CD8-positive, alpha-beta T cell (primary cell): ENCODE measurements at regions of chr1 and their contacts with region 1.

Region 1: GRCh38 chr1:16236511-16237342 is at the start of gene CPLANE2:
- DNase-seq: peak; percentile 88 to 98 (median 96)
- ATAC-seq: peak; percentile 77
- H3K4me3 ChIP-seq: peak within 1 kb of the TSS; percentile 88 to 92
- H3K4me3 Mint-ChIP-seq: peak within 1 kb of the TSS; percentile 88
- H3K27ac ChIP-seq: peak within 1 kb of the TSS; percentile 85 to 91
- H3K27ac Mint-ChIP-seq: peak within 1 kb of the TSS; percentile 92
- H3K4me1 ChIP-seq: peaks cover 17% of the 10 kb centered on the region
- H3K4me1 Mint-ChIP-seq: peaks cover 20% of the 10 kb centered on the region
- H3K27me3 ChIP-seq: no peaks in the 10 kb centered on the region
- H3K27me3 Mint-ChIP-seq: no peaks in the 10 kb centered on the region
- CTCF ChIP-seq: no peak
- total RNA-seq, gene CPLANE2: 5.2 to 5.6 TPM

Region 2: GRCh38 chr1:15617175-15617880 is 619.4 kb before region 1 on chr1 and contains the start of gene DDI2:
- CTCF ChIA-PET with region 1: no interaction called
- POLR2A ChIA-PET with region 1: no interaction called
- intact Hi-C with region 1: loop called in 1 of 2 experiments (anchors 10 kb)
- DNase-seq: peak; percentile 83 to 96 (median 92)
- ATAC-seq: peak; percentile 88
- H3K4me3 ChIP-seq: peak within 1 kb of the TSS; percentile 83 to 89
- H3K4me3 Mint-ChIP-seq: peak within 1 kb of the TSS; percentile 94
- H3K27ac ChIP-seq: peak within 1 kb of the TSS; percentile 73 to 91
- H3K27ac Mint-ChIP-seq: peak within 1 kb of the TSS; percentile 94
- H3K4me1 ChIP-seq: peaks cover 44% of the 10 kb centered on the region
- H3K4me1 Mint-ChIP-seq: peaks cover 46% of the 10 kb centered on the region
- H3K27me3 ChIP-seq: no peaks in the 10 kb centered on the region
- H3K27me3 Mint-ChIP-seq: no peaks in the 10 kb centered on the region
- CTCF ChIP-seq: no peak
- total RNA-seq, gene DDI2: 34.7 to 37.7 TPM

Region 3: DNA sequence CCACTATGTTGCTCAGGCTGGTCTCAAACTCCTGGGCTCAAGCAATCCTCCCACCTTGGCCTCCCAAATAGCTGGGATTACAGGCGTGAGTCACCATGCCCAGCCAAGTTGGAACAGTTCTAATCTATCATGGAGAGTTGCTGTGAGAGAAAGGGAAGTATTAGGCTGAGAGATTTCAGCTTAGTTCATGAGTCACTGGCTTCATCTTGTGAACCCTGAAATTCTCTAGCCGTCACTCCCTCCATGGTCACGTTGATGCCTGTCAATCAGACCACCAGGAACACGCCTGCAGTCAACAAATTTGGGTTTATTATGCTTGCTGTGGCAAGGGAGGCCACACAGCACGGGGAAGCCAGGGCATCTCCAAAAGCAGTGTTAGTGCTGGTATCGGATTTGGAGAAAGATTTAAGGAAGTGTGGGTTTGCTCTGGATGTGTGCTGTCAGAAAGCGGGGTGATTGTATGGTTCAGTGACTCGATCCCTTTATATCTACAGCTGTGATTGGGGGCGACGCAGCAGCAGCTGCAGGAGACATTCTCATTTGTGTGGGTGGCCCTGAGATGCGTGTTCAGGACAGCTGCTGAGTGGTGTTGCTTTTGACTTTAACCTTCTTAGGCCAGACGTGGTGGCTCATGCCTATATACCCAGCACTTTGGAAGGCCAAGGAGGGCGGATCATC is 448.0 kb before region 1 on chr1:
- CTCF ChIA-PET with region 1: no interaction called
- POLR2A ChIA-PET with region 1: no interaction called
- intact Hi-C with region 1: no loop called
- DNase-seq: peak in 1 of 9 experiments; percentile 18
- ATAC-seq: no peak
- H3K4me3 ChIP-seq: no peak overlapping the region
- H3K4me3 Mint-ChIP-seq: no peak overlapping the region
- H3K27ac ChIP-seq: no peak overlapping the region
- H3K27ac Mint-ChIP-seq: no peak overlapping the region
- H3K4me1 ChIP-seq: no peaks in the 10 kb centered on the region
- H3K4me1 Mint-ChIP-seq: peaks cover 3% of the 10 kb centered on the region
- H3K27me3 ChIP-seq: no peaks in the 10 kb centered on the region
- H3K27me3 Mint-ChIP-seq: peaks cover 11% of the 10 kb centered on the region
- CTCF ChIP-seq: no peak

Region 4: GRCh38 chr1:15975805-15976680 is 260.7 kb before region 1 on chr1 and contains the start of gene ZBTB17:
- CTCF ChIA-PET with region 1: no interaction called
- POLR2A ChIA-PET with region 1: no interaction called
- intact Hi-C with region 1: loop called in 1 of 2 experiments (anchors 1 kb)
- DNase-seq: peak; percentile 90 to 98 (median 95)
- ATAC-seq: peak; percentile 88
- H3K4me3 ChIP-seq: peak within 1 kb of the TSS; percentile 89 to 93
- H3K4me3 Mint-ChIP-seq: peak within 1 kb of the TSS; percentile 90
- H3K27ac ChIP-seq: peak within 1 kb of the TSS; percentile 68 to 87
- H3K27ac Mint-ChIP-seq: peak within 1 kb of the TSS; percentile 94
- H3K4me1 ChIP-seq: peaks cover 11% of the 10 kb centered on the region
- H3K4me1 Mint-ChIP-seq: peaks cover 38% of the 10 kb centered on the region
- H3K27me3 ChIP-seq: no peaks in the 10 kb centered on the region
- H3K27me3 Mint-ChIP-seq: no peaks in the 10 kb centered on the region
- CTCF ChIP-seq: no peak
- total RNA-seq, gene ZBTB17: 106 to 115 TPM

Region 5: DNA sequence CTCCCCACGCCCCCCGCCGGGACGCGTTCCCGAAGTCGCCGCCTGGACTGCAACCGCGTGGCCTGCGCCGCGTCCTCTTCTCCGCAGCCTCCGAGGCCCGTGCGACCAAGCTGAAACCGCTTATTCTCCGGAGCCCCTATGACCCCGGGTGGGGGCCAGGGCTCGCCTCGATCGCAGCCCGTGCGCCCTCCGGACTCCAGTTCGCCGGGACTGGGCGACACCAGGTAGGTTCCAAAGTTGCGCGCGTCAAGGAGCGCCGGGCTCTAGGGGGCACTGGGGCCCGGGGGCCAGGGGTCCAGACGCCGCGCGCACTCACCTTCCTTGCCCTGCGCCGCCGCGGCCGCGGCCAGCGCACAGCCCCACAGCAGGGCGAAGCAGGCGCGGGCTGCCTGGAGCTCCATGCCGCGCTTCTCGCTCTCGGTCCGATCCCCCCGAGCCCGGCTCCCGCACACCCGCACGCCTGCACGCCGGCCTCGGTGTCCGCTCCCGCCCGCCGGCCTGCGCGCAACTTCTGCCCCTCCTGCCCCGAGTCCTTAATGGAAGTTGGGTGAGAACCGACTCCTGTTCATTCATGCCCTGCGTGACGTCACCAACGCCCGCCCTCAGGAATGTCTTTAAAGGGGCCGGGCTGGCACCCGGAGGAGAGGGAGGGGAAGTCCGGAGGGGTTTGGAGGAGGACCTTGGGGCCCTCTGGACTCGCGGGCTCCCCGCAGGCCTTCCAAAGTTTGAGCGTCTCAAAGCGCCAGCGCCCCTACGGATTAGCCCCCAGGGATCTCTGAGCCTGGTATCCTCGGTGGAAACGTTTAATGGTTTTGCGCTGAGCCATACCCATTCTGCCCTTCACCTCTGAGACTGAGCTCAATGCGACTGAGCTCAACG is 81.0 kb before region 1 on chr1 and contains the start of gene EPHA2:
- CTCF ChIA-PET with region 1: no interaction called
- POLR2A ChIA-PET with region 1: no interaction called
- intact Hi-C with region 1: no loop called
- DNase-seq: peak in 2 of 9 experiments; percentile 28 to 33
- ATAC-seq: no peak
- H3K4me3 ChIP-seq: peak within 1 kb of the TSS; percentile 32 to 40
- H3K4me3 Mint-ChIP-seq: peak within 1 kb of the TSS; percentile 73
- H3K27ac ChIP-seq: no peak within 1 kb of the TSS
- H3K27ac Mint-ChIP-seq: no peak within 1 kb of the TSS
- H3K4me1 ChIP-seq: peaks cover 57% of the 10 kb centered on the region
- H3K4me1 Mint-ChIP-seq: peaks cover 43% of the 10 kb centered on the region
- H3K27me3 ChIP-seq: peaks cover 9 to 34% of the 10 kb centered on the region in 2 experiments
- H3K27me3 Mint-ChIP-seq: peaks cover 13% of the 10 kb centered on the region
- CTCF ChIP-seq: no peak
- total RNA-seq, gene EPHA2: not detected

Region 6: DNA sequence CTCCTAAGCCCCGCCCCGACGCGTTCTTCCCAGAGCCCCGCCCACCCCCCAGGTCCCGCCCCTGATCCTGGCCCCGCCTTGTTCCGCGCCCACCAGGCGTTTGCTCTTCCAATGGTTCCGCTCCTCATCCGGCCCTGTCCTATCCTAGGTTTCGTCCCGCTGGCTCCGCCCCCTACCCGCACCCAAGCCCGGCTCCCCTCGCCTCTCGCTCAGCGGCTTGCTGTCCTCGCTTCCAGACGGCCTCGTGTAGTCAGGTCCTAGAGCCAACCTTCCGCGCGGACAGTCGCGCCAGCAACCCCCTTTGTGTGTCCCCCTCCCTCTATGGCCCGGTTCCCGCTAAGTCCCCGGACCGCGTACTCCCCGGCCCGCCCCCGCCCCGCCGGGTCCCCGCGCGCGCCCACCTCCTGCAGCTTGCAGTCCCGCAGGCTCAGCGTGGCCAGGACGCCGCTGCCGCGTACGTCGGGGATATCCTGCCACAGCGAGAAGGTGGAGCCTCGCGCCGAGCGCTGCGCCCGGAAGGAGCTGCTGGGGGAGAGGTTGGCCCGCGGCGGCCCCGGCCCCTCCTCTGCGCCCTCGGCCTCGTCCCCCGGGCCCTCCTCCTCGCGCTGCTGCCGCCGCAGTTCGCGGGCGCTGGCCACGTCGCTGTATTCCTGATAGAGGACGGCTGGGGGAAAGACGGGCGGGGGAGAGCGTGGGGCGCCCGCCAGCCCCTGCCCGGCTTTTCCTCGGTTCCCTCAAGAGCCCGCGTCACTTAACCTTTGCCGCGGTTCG is 30.0 kb before region 1 on chr1:
- CTCF ChIA-PET with region 1: interaction called, 42 read pairs
- POLR2A ChIA-PET with region 1: interaction called, 13 read pairs
- intact Hi-C with region 1: loop called (anchors 1 kb)
- DNase-seq: peak; percentile 84 to 97 (median 93)
- ATAC-seq: peak; percentile 86
- H3K4me3 ChIP-seq: peak overlapping the region; percentile 68 to 83
- H3K4me3 Mint-ChIP-seq: peak overlapping the region; percentile 93
- H3K27ac ChIP-seq: peak overlapping the region; percentile 69 to 87
- H3K27ac Mint-ChIP-seq: peak overlapping the region; percentile 95
- H3K4me1 ChIP-seq: peaks cover 14% of the 10 kb centered on the region
- H3K4me1 Mint-ChIP-seq: peaks cover 10% of the 10 kb centered on the region
- H3K27me3 ChIP-seq: no peaks in the 10 kb centered on the region
- H3K27me3 Mint-ChIP-seq: no peaks in the 10 kb centered on the region
- CTCF ChIP-seq: no peak

Region 7: DNA sequence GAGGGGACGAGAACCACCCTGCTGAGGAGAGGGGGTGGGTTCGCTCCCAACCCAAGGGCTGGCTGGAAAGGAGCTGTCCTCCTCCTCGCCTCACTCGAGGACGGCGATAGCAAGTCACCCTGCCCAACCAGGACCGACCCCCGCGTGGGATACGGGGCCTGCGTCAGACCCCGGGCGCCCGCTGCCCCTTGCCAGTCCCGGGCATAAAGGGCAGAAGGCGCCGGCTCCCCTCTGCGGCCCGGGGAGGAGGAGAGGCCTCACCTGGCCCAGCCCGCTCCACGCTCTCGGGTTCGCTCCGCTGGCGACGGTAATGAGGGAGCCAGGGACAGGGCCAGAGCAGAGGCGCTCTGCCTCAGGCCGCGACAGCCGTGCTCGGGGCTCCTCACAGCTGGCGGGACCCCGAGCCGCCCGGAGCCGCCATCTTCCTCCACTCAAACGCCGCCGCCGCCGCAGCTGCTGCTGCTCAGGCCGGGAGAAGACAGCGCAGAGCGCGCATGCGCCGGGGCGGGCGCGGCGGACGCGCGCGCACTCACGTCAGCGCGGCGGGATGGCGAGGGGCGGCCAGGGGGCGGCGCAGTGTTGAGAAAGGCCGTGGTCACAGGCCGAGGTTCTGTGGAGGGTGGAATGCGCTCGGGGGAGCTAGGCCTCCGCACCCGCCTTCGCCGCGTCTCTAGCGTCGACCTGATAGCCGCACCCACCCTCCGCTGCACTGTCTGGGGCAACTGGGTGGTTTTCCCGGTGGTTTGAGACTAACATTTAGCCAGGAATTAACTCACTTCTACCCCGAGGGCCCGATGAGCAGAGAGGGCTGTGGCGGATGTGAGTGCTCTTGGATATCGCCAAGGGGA is 115.5 kb after region 1 on chr1 and contains the start of gene FBXO42:
- CTCF ChIA-PET with region 1: interaction called, 3 read pairs
- POLR2A ChIA-PET with region 1: interaction called, 4 read pairs
- intact Hi-C with region 1: loop called (anchors 2 to 5 kb)
- DNase-seq: peak; percentile 82 to 97 (median 91)
- ATAC-seq: peak; percentile 90
- H3K4me3 ChIP-seq: peak within 1 kb of the TSS; percentile 59 to 89
- H3K4me3 Mint-ChIP-seq: peak within 1 kb of the TSS; percentile 92
- H3K27ac ChIP-seq: peak within 1 kb of the TSS; percentile 74 to 96
- H3K27ac Mint-ChIP-seq: peak within 1 kb of the TSS; percentile 93
- H3K4me1 ChIP-seq: peaks cover 22% of the 10 kb centered on the region
- H3K4me1 Mint-ChIP-seq: peaks cover 33% of the 10 kb centered on the region
- H3K27me3 ChIP-seq: no peaks in the 10 kb centered on the region
- H3K27me3 Mint-ChIP-seq: no peaks in the 10 kb centered on the region
- CTCF ChIP-seq: peak; percentile 37
- total RNA-seq, gene FBXO42: 18.0 to 18.2 TPM

Region 8: GRCh38 chr1:16521288-16521583 is 284.5 kb after region 1 on chr1:
- CTCF ChIA-PET with region 1: no interaction called
- POLR2A ChIA-PET with region 1: no interaction called
- intact Hi-C with region 1: no loop called
- DNase-seq: no peak
- ATAC-seq: no peak
- H3K4me3 ChIP-seq: no peak overlapping the region
- H3K4me3 Mint-ChIP-seq: peak overlapping the region; percentile 62
- H3K27ac ChIP-seq: no peak overlapping the region
- H3K27ac Mint-ChIP-seq: no peak overlapping the region
- H3K4me1 ChIP-seq: no peaks in the 10 kb centered on the region
- H3K4me1 Mint-ChIP-seq: peaks cover 3% of the 10 kb centered on the region
- H3K27me3 ChIP-seq: peaks cover 0 to 7% of the 10 kb centered on the region in 2 experiments
- H3K27me3 Mint-ChIP-seq: peaks cover 21% of the 10 kb centered on the region
- CTCF ChIP-seq: no peak

Region 9: GRCh38 chr1:16613185-16614147 is 376.7 kb after region 1 on chr1 and contains the start of gene NBPF1:
- CTCF ChIA-PET with region 1: no interaction called
- POLR2A ChIA-PET with region 1: no interaction called
- intact Hi-C with region 1: loop called in 1 of 2 experiments (anchors 5 kb)
- DNase-seq: peak; percentile 66 to 95 (median 93)
- ATAC-seq: peak; percentile 94
- H3K4me3 ChIP-seq: peak within 1 kb of the TSS; percentile 61 to 68
- H3K4me3 Mint-ChIP-seq: no peak within 1 kb of the TSS
- H3K27ac ChIP-seq: peak within 1 kb of the TSS; percentile 21 to 42
- H3K27ac Mint-ChIP-seq: no peak within 1 kb of the TSS
- H3K4me1 ChIP-seq: peaks cover 18% of the 10 kb centered on the region
- H3K4me1 Mint-ChIP-seq: no peaks in the 10 kb centered on the region
- H3K27me3 ChIP-seq: no peaks in the 10 kb centered on the region
- H3K27me3 Mint-ChIP-seq: no peaks in the 10 kb centered on the region
- CTCF ChIP-seq: no peak
- total RNA-seq, gene NBPF1: 5.4 to 7.0 TPM